ENCODE measurements at regions of chr19 and their contacts with region 1.

Region 1: GRCh38 chr19:47663841-47664771 is 49.1 kb upstream of the EHD2 start:
- DNase-seq: peak; percentile 61 to 88 (median 73)
- H3K4me3 ChIP-seq: no peak overlapping the region
- H3K27ac ChIP-seq: peak overlapping the region; percentile 74 to 93
- H3K4me1 ChIP-seq: peaks cover 12% of the 10 kb centered on the region
- H3K27me3 ChIP-seq: no peaks in the 10 kb centered on the region
- CTCF ChIP-seq: no peak
- EP300 ChIP-seq: peak; percentile 85
- POLR2A ChIP-seq: no peak

Region 2: GRCh38 chr19:47600246-47601179 is 63.6 kb before region 1 on chr19:
- intact Hi-C with region 1: loop called in 1 of 4 experiments (anchors 10 kb)
- DNase-seq: peak; percentile 99 to 100 (median 99)
- H3K4me3 ChIP-seq: peak overlapping the region; percentile 55
- H3K27ac ChIP-seq: peak overlapping the region; percentile 64 to 68
- H3K4me1 ChIP-seq: peaks cover 2% of the 10 kb centered on the region
- H3K27me3 ChIP-seq: no peaks in the 10 kb centered on the region
- CTCF ChIP-seq: peak in 1 of 3 donors; percentile 6
- EP300 ChIP-seq: no peak
- POLR2A ChIP-seq: peak; percentile 68

Measured in ovary (tissue), 10 donors.